CD4-positive, alpha-beta memory T cell (primary cell): ENCODE measurements at regions of chrX and their contacts with region 1.

Region 1: GRCh38 chrX:132071260-132071659 is 48.2 kb downstream of the STK26 start:
- DNase-seq: peak in 1 of 5 donors; percentile 5
- H3K4me3 ChIP-seq: no peak overlapping the region
- H3K4me3 Mint-ChIP-seq: no peak overlapping the region
- H3K27ac ChIP-seq: no peak overlapping the region
- H3K27ac Mint-ChIP-seq: no peak overlapping the region
- H3K4me1 ChIP-seq: no peaks in the 10 kb centered on the region
- H3K4me1 Mint-ChIP-seq: no peaks in the 10 kb centered on the region
- H3K27me3 ChIP-seq: no peaks in the 10 kb centered on the region
- H3K27me3 Mint-ChIP-seq: no peaks in the 10 kb centered on the region

Region 2: DNA sequence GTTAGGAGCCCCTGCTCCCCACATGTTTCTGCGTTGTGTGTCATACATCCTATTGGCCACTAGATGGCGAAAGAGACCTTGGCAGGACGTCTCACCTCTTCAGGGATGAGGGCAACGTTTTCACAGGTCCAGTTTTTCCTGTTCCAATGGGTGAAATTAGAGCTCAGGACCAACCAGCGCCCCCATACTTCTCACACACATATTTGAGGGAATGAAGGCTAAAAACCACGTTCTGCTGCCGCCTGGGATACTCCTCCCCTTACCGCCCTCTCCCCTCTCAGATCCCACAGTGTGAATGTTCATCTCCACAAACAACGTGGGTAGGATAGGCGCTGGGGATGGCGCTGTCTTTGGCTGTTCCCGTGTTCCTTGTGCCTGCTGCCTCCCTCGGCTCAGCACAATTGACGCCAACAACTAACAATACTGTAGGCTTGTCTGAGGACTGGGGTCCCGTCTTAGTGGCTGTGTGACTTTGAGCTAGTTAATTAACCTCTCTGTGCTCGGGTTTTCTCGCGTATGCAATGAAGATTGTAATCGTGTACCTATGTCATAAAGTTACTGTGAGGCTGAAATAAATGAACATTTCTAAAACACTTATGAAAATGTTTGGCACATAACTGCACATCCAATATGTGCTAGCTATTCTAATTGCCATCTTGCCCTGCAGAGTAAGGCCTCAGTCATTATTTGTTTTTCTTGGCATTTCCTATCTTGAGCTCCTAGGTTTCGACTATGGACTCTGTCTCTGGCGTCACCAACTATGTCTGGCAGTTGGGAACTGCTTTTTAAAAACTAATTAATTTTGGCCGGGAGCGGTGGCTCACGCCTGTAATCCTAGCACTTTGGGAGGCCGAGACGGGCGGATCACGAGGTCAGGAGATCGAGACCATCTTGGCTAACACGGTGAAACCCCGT is 229.5 kb before region 1 on chrX:
- CTCF ChIA-PET with region 1: interaction called, 12 read pairs
- POLR2A ChIA-PET with region 1: no interaction called
- intact Hi-C with region 1: loop called (anchors 2 kb)
- DNase-seq: peak in 4 of 5 donors; percentile 50 to 65 (median 52)
- H3K4me3 ChIP-seq: no peak overlapping the region
- H3K4me3 Mint-ChIP-seq: peak overlapping the region in 1 of 8 donors; percentile 16
- H3K27ac ChIP-seq: no peak overlapping the region
- H3K27ac Mint-ChIP-seq: peak overlapping the region in 1 of 7 donors; percentile 12
- H3K4me1 ChIP-seq: no peaks in the 10 kb centered on the region
- H3K4me1 Mint-ChIP-seq: peaks cover 0 to 8% (median 5%) of the 10 kb centered on the region in 4 donors
- H3K27me3 ChIP-seq: no peaks in the 10 kb centered on the region
- H3K27me3 Mint-ChIP-seq: no peaks in the 10 kb centered on the region

Region 3: DNA sequence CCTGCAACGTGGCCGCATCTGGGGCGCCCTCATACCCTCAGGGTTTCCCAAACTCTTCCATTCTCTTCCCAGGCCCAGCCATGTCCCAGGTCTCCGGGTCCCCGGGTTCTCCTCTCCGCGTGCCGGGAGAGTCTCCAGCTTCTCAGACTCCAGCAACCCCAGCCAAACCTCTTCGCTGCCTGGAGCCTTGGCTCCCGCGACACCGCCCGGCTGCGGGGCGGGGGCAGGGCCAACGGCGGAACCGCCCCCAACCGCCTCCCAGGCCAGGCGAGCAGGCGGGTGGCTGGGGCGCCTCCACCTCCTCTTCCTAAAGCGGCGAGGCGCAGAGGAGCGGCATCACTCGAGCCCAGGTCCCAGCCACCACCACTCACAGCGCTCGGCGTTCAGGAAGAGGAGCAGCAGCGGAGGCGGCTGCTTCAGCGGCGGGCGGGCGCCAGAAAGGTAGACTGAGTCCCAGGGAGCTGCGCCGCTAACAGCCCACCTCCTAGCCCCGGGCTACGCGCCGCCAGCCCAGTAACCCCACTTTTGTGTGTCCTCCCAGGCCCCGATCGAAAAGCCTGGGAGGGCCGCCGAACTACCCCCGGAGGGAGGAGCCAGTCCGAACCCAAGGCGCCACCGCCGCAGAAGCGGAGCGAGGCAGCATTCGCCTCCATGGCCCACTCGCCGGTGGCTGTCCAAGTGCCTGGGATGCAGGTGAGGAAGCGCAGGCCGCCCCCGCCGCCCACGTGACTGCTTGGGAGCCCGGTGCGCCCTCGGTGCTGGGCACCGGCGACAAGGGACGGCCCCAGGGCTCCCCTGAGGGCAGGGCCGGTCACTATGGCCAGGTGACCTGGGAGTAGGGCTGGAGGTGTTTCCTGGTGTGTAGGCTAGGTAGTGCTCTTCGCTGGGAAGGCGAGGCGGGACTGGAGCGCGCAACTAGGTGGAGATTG is 48.0 kb before region 1 on chrX and contains the start of gene STK26:
- CTCF ChIA-PET with region 1: no interaction called
- POLR2A ChIA-PET with region 1: no interaction called
- intact Hi-C with region 1: loop called (anchors 2 kb)
- DNase-seq: peak; percentile 75 to 80 (median 78)
- H3K4me3 ChIP-seq: peak within 1 kb of the TSS; percentile 29 to 76
- H3K4me3 Mint-ChIP-seq: peak within 1 kb of the TSS; percentile 91 to 96 (median 94)
- H3K27ac ChIP-seq: peak within 1 kb of the TSS; percentile 75
- H3K27ac Mint-ChIP-seq: peak within 1 kb of the TSS; percentile 90 to 96 (median 94)
- H3K4me1 ChIP-seq: peaks cover 26% of the 10 kb centered on the region
- H3K4me1 Mint-ChIP-seq: peaks cover 12 to 38% (median 25%) of the 10 kb centered on the region in 4 donors
- H3K27me3 ChIP-seq: no peaks in the 10 kb centered on the region
- H3K27me3 Mint-ChIP-seq: no peaks in the 10 kb centered on the region
- total RNA-seq, gene STK26: 38.1 to 41.7 TPM